Naive thymus-derived CD4-positive, alpha-beta T cell (primary cell): ENCODE measurements at regions of chr14 and their contacts with region 1.

Region 1: DNA sequence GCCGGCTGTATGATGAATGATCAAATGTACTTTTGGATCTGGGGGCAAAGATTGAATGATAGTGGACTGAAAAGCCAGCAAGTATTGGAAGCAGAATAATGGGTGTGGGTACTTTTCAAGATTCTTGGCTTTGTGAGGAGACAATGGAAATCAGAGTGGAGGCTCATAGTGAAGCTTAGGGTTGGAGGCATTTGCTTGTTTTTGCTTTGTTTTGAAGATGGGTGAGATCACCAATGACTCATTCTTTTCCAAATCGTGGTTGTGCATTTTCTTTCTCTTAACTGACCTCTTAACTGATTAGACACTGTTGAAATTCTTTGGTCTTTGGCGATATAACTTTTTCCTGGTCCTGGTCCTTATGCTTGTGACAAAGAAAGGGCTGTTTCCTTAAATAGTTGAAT is 54.4 kb downstream of the PELI2 start:
- DNase-seq: no peak
- ATAC-seq: no peak
- H3K4me3 ChIP-seq: no peak overlapping the region
- H3K4me3 Mint-ChIP-seq: peak overlapping the region; percentile 15 to 75 (median 42)
- H3K27ac ChIP-seq: no peak overlapping the region
- H3K27ac Mint-ChIP-seq: peak overlapping the region; percentile 2 to 91 (median 54)
- H3K4me1 ChIP-seq: peaks cover 3 to 26% of the 10 kb centered on the region in 2 donors
- H3K4me1 Mint-ChIP-seq: peaks cover 32 to 70% (median 63%) of the 10 kb centered on the region in 7 donors
- H3K27me3 ChIP-seq: no peaks in the 10 kb centered on the region
- H3K27me3 Mint-ChIP-seq: no peaks in the 10 kb centered on the region

Region 2: GRCh38 chr14:55807059-55807499 is 365.5 kb before region 1 on chr14:
- CTCF ChIA-PET with region 1: no interaction called
- POLR2A ChIA-PET with region 1: no interaction called
- intact Hi-C with region 1: loop called in 1 of 2 experiments (anchors 5 kb)
- DNase-seq: peak; percentile 46 to 91 (median 82)
- ATAC-seq: peak; percentile 91
- H3K4me3 ChIP-seq: peak overlapping the region; percentile 23
- H3K4me3 Mint-ChIP-seq: peak overlapping the region; percentile 31 to 70 (median 54)
- H3K27ac ChIP-seq: peak overlapping the region; percentile 61
- H3K27ac Mint-ChIP-seq: peak overlapping the region; percentile 90 to 98 (median 91)
- H3K4me1 ChIP-seq: peaks cover 16 to 17% of the 10 kb centered on the region in 2 donors
- H3K4me1 Mint-ChIP-seq: peaks cover 25 to 64% (median 36%) of the 10 kb centered on the region in 7 donors
- H3K27me3 ChIP-seq: no peaks in the 10 kb centered on the region
- H3K27me3 Mint-ChIP-seq: no peaks in the 10 kb centered on the region

Region 3: GRCh38 chr14:55976219-55976618 is 196.4 kb before region 1 on chr14:
- CTCF ChIA-PET with region 1: no interaction called
- POLR2A ChIA-PET with region 1: no interaction called
- intact Hi-C with region 1: no loop called
- DNase-seq: no peak
- ATAC-seq: no peak
- H3K4me3 ChIP-seq: no peak overlapping the region
- H3K4me3 Mint-ChIP-seq: no peak overlapping the region
- H3K27ac ChIP-seq: no peak overlapping the region
- H3K27ac Mint-ChIP-seq: no peak overlapping the region
- H3K4me1 ChIP-seq: no peaks in the 10 kb centered on the region
- H3K4me1 Mint-ChIP-seq: peaks cover 0 to 2% (median 0%) of the 10 kb centered on the region in 7 donors
- H3K27me3 ChIP-seq: no peaks in the 10 kb centered on the region
- H3K27me3 Mint-ChIP-seq: peaks cover 6 to 13% (median 8%) of the 10 kb centered on the region in 5 donors

Region 4: DNA sequence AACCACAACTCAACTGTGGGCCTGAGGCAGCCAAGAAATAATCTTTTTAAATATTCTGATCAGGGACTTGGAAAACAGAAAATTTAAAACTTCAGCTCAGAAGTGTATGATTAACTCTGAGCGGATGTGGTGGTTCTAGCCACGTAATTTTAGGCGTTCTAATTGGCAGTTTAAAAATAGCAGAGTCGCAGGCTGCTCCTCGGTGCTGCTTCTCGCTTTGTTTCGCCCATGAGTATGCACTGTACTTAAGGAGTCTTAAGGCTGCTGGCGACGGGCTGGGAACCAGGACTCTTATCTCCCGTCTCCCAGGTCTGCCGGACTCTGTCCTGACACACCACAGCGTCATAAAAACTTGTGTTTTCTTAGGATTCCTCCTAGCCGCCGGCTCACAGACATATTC is 167.8 kb before region 1 on chr14:
- CTCF ChIA-PET with region 1: no interaction called
- POLR2A ChIA-PET with region 1: no interaction called
- intact Hi-C with region 1: loop called in 1 of 2 experiments (anchors 10 kb)
- DNase-seq: peak in 7 of 9 donors; percentile 24 to 64 (median 41)
- ATAC-seq: peak; percentile 43
- H3K4me3 ChIP-seq: no peak overlapping the region
- H3K4me3 Mint-ChIP-seq: peak overlapping the region; percentile 19 to 77 (median 58)
- H3K27ac ChIP-seq: no peak overlapping the region
- H3K27ac Mint-ChIP-seq: peak overlapping the region in 2 of 9 donors; percentile 58 to 63
- H3K4me1 ChIP-seq: peaks cover 26% of the 10 kb centered on the region in 2 donors
- H3K4me1 Mint-ChIP-seq: peaks cover 26 to 45% (median 32%) of the 10 kb centered on the region in 7 donors
- H3K27me3 ChIP-seq: peaks cover 0 to 18% of the 10 kb centered on the region in 2 donors
- H3K27me3 Mint-ChIP-seq: peaks cover 46 to 82% (median 54%) of the 10 kb centered on the region in 5 donors

Region 5: GRCh38 chr14:56195704-56196103 is 23.1 kb after region 1 on chr14:
- CTCF ChIA-PET with region 1: no interaction called
- POLR2A ChIA-PET with region 1: no interaction called
- intact Hi-C with region 1: loop called in 1 of 2 experiments (anchors 2 kb)
- DNase-seq: peak in 2 of 9 donors; percentile 11 to 19
- ATAC-seq: no peak
- H3K4me3 ChIP-seq: no peak overlapping the region
- H3K4me3 Mint-ChIP-seq: peak overlapping the region; percentile 15 to 79 (median 62)
- H3K27ac ChIP-seq: no peak overlapping the region
- H3K27ac Mint-ChIP-seq: peak overlapping the region in 7 of 9 donors; percentile 52 to 88 (median 84)
- H3K4me1 ChIP-seq: peaks cover 0 to 15% of the 10 kb centered on the region in 2 donors
- H3K4me1 Mint-ChIP-seq: peaks cover 16 to 38% (median 34%) of the 10 kb centered on the region in 7 donors
- H3K27me3 ChIP-seq: no peaks in the 10 kb centered on the region
- H3K27me3 Mint-ChIP-seq: no peaks in the 10 kb centered on the region

Region 6: DNA sequence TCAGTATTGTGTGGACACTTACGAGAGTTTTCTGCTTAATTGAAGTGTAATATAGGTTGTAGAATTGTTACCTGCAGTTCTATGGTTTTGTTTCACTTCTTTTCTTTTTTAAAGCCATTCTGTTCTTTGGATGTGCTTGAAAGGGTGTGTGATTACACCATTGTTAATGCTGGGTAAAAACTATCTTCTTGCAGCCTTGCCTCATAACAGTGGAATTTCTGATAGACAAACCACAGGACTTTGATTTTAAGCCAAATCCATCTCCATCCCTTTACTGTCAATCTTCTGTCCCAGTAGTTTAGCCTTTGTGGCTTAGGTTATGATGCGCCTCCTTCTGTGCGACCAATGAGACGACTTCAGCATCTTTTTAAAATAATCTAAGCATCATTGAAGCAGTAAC is 127.9 kb after region 1 on chr14:
- CTCF ChIA-PET with region 1: no interaction called
- POLR2A ChIA-PET with region 1: no interaction called
- intact Hi-C with region 1: no loop called
- DNase-seq: no peak
- ATAC-seq: no peak
- H3K4me3 ChIP-seq: no peak overlapping the region
- H3K4me3 Mint-ChIP-seq: no peak overlapping the region
- H3K27ac ChIP-seq: no peak overlapping the region
- H3K27ac Mint-ChIP-seq: no peak overlapping the region
- H3K4me1 ChIP-seq: no peaks in the 10 kb centered on the region
- H3K4me1 Mint-ChIP-seq: no peaks in the 10 kb centered on the region
- H3K27me3 ChIP-seq: no peaks in the 10 kb centered on the region
- H3K27me3 Mint-ChIP-seq: no peaks in the 10 kb centered on the region